Lower leg skin (tissue), 4 donors: ENCODE measurements at regions of chr18 and their contacts with region 1.

Region 1: GRCh38 chr18:61901323-61901986 is 8.6 kb upstream of the RNF152 start:
- DNase-seq: no peak
- H3K4me3 ChIP-seq: no peak overlapping the region
- CTCF ChIP-seq: no peak
- POLR2A ChIP-seq: no peak

Region 2: DNA sequence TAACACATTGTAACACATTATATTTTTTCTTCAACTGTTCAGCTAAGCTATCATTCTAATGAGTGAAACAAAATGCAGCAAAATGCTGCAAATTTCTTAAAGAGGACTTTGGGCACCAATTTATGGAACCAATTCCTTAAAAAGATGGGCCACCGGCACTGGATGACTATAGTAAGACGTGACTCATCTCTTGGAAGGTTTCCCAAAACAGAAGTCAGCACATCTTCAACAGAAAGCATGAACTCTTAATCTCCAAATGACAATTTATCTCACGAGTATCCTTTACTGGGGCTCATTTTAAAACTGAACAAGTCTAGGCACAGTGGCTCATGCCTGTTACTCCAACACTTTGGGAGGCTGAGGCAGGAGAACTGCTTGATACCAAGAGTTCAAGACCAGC is 354.9 kb before region 1 on chr18:
- intact Hi-C with region 1: loop called (anchors 10 kb)
- DNase-seq: no peak
- H3K4me3 ChIP-seq: no peak overlapping the region
- CTCF ChIP-seq: no peak
- POLR2A ChIP-seq: no peak

Region 3: GRCh38 chr18:61575419-61575818 is 326.0 kb before region 1 on chr18:
- intact Hi-C with region 1: loop called (anchors 10 kb)
- DNase-seq: no peak
- H3K4me3 ChIP-seq: no peak overlapping the region
- CTCF ChIP-seq: no peak
- POLR2A ChIP-seq: no peak